ENCODE measurements at regions of chr16 and their contacts with region 1.

Region 1: DNA sequence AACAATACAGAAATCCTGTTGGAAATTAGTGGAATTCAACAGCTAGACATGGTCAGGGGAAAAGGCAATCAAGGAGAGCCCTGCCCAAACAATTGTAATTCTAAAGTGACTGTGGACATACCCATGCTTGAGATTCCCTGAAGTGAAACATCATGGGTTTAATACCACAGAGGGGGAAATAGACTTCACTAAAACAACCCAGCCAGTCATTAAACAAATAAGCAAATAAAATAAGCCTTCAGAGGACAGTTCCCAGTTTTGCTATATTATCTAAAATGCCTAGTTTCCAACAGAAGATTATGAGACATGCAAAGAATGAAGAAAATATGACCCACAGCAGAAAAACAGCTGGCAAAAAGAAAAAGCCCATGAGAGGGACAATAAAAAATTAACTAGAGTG is 376.3 kb downstream of the CDH8 start:
- DNase-seq: no peak
- ATAC-seq: no peak
- H3K4me3 ChIP-seq: no peak overlapping the region
- H3K4me3 Mint-ChIP-seq: no peak overlapping the region
- H3K27ac ChIP-seq: no peak overlapping the region
- H3K27ac Mint-ChIP-seq: no peak overlapping the region
- H3K4me1 ChIP-seq: no peaks in the 10 kb centered on the region
- H3K4me1 Mint-ChIP-seq: no peaks in the 10 kb centered on the region
- H3K27me3 ChIP-seq: no peaks in the 10 kb centered on the region
- H3K27me3 Mint-ChIP-seq: no peaks in the 10 kb centered on the region
- CTCF ChIP-seq: no peak

Region 2: DNA sequence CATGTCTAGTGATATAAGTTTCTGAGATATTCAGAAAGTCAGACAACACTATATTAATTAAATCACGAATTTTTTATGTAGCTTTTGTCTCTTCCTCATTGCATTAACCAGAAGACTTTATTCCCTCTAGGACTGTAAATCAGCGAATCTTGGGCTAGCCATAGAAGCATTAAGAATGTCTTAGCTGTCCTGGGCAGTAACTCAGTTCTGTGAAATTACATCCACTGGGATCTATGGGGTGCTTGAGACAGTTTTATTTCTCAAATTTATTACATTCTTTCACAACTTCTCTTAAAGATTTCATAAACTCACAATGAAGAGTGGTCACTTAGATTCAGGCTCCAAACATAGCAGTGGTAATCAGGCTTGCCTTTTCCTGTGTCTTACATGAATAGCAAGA is 777.1 kb before region 1 on chr16:
- CTCF ChIA-PET with region 1: no interaction called
- POLR2A ChIA-PET with region 1: no interaction called
- intact Hi-C with region 1: no loop called
- DNase-seq: no peak
- ATAC-seq: no peak
- H3K4me3 ChIP-seq: no peak overlapping the region
- H3K4me3 Mint-ChIP-seq: no peak overlapping the region
- H3K27ac ChIP-seq: no peak overlapping the region
- H3K27ac Mint-ChIP-seq: no peak overlapping the region
- H3K4me1 ChIP-seq: no peaks in the 10 kb centered on the region
- H3K4me1 Mint-ChIP-seq: no peaks in the 10 kb centered on the region
- H3K27me3 ChIP-seq: no peaks in the 10 kb centered on the region
- H3K27me3 Mint-ChIP-seq: no peaks in the 10 kb centered on the region
- CTCF ChIP-seq: no peak

Region 3: DNA sequence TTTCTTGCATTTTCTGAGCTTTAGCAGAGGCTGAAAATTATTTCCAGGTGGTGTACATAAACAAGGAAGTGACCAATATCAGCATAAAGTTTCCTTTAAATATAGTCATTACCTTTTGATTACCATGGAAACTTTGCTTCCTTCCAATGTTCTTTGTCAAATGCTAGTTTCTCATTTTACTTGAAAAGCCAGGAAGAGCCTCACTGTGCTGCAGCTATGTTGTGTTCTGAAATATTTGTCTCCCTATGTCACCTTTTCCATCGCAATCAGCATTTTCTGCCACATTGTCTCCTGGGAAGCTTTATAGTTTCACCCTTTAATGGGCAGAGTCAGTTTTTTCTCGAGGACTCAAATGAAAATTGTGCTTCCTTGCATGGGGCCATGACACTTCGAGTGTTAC is 119.7 kb before region 1 on chr16:
- CTCF ChIA-PET with region 1: no interaction called
- POLR2A ChIA-PET with region 1: no interaction called
- intact Hi-C with region 1: no loop called
- DNase-seq: no peak
- ATAC-seq: no peak
- H3K4me3 ChIP-seq: no peak overlapping the region
- H3K4me3 Mint-ChIP-seq: no peak overlapping the region
- H3K27ac ChIP-seq: no peak overlapping the region
- H3K27ac Mint-ChIP-seq: no peak overlapping the region
- H3K4me1 ChIP-seq: no peaks in the 10 kb centered on the region
- H3K4me1 Mint-ChIP-seq: no peaks in the 10 kb centered on the region
- H3K27me3 ChIP-seq: no peaks in the 10 kb centered on the region
- H3K27me3 Mint-ChIP-seq: no peaks in the 10 kb centered on the region
- CTCF ChIP-seq: no peak

Region 4: GRCh38 chr16:61681124-61681523 is 21.2 kb after region 1 on chr16:
- CTCF ChIA-PET with region 1: no interaction called
- POLR2A ChIA-PET with region 1: no interaction called
- intact Hi-C with region 1: no loop called
- DNase-seq: no peak
- ATAC-seq: no peak
- H3K4me3 ChIP-seq: no peak overlapping the region
- H3K4me3 Mint-ChIP-seq: no peak overlapping the region
- H3K27ac ChIP-seq: no peak overlapping the region
- H3K27ac Mint-ChIP-seq: no peak overlapping the region
- H3K4me1 ChIP-seq: no peaks in the 10 kb centered on the region
- H3K4me1 Mint-ChIP-seq: no peaks in the 10 kb centered on the region
- H3K27me3 ChIP-seq: no peaks in the 10 kb centered on the region
- H3K27me3 Mint-ChIP-seq: no peaks in the 10 kb centered on the region
- CTCF ChIP-seq: no peak

Region 5: DNA sequence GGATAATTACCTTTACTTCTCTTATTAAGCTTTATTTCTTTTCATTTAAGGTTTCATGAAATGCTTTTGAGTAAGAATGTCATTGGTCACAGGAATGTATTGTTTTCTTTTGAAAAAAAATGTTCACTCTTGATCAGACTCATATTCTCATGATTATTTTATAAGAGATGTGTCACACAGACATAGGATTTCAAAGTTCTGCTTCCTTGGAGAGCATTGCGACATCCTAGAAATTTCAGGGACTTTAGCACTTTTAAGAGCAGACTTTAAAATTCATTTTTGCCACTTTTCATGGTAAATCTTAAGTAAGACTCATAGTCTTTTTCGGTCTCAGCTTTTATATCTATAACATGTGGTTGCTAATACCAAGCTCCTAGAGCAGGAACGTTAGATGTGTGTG is 61.6 kb after region 1 on chr16:
- CTCF ChIA-PET with region 1: no interaction called
- POLR2A ChIA-PET with region 1: no interaction called
- intact Hi-C with region 1: loop called in 1 of 2 experiments (anchors 10 kb)
- DNase-seq: no peak
- ATAC-seq: no peak
- H3K4me3 ChIP-seq: no peak overlapping the region
- H3K4me3 Mint-ChIP-seq: no peak overlapping the region
- H3K27ac ChIP-seq: no peak overlapping the region
- H3K27ac Mint-ChIP-seq: no peak overlapping the region
- H3K4me1 ChIP-seq: no peaks in the 10 kb centered on the region
- H3K4me1 Mint-ChIP-seq: no peaks in the 10 kb centered on the region
- H3K27me3 ChIP-seq: no peaks in the 10 kb centered on the region
- H3K27me3 Mint-ChIP-seq: no peaks in the 10 kb centered on the region
- CTCF ChIP-seq: no peak

Measured in CD8-positive, alpha-beta T cell (primary cell).